ENCODE measurements at regions of chr19 and their contacts with region 1.

Region 1: GRCh38 chr19:10644260-10645007 is 9.7 kb upstream of the ILF3 start:
- DNase-seq: peak; percentile 90
- ATAC-seq: peak; percentile 90
- H3K4me3 Mint-ChIP-seq: no peak overlapping the region
- H3K27ac Mint-ChIP-seq: peak overlapping the region; percentile 89
- H3K4me1 Mint-ChIP-seq: peaks cover 37% of the 10 kb centered on the region
- H3K27me3 Mint-ChIP-seq: no peaks in the 10 kb centered on the region

Region 2: GRCh38 chr19:10565567-10566407 is 78.6 kb before region 1 on chr19 and contains the start of gene KRI1:
- CTCF ChIA-PET with region 1: interaction called, 14 read pairs
- POLR2A ChIA-PET with region 1: interaction called, 4 read pairs
- DNase-seq: peak; percentile 99
- ATAC-seq: peak; percentile 51
- H3K4me3 Mint-ChIP-seq: peak within 1 kb of the TSS; percentile 98
- H3K27ac Mint-ChIP-seq: peak within 1 kb of the TSS; percentile 94
- H3K4me1 Mint-ChIP-seq: peaks cover 46% of the 10 kb centered on the region
- H3K27me3 Mint-ChIP-seq: no peaks in the 10 kb centered on the region
- total RNA-seq, gene KRI1: 64.0 to 72.8 TPM

Region 3: DNA sequence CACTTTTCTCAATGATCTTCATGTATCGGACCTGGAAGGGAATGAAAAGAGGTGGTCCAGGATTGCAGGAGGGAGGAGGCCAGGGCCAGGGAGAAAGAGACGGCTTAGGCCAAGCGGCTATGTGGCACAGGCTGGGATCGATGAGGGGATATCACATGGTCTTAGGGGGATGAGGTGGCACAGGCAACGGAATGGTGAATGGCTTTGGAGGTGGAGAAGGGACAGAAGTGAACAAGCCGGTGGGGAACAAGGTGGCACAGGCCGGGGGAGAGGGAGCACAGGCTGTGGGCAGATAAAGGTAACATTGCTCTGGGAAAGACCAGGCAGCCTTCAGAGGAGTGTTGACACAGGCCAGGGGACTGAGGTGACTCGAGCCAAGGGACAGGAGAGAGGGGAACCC is 70.0 kb before region 1 on chr19:
- CTCF ChIA-PET with region 1: interaction called, 421 read pairs
- POLR2A ChIA-PET with region 1: no interaction called
- DNase-seq: no peak
- ATAC-seq: no peak
- H3K4me3 Mint-ChIP-seq: no peak overlapping the region
- H3K27ac Mint-ChIP-seq: no peak overlapping the region
- H3K4me1 Mint-ChIP-seq: peaks cover 37% of the 10 kb centered on the region
- H3K27me3 Mint-ChIP-seq: no peaks in the 10 kb centered on the region

Region 4: DNA sequence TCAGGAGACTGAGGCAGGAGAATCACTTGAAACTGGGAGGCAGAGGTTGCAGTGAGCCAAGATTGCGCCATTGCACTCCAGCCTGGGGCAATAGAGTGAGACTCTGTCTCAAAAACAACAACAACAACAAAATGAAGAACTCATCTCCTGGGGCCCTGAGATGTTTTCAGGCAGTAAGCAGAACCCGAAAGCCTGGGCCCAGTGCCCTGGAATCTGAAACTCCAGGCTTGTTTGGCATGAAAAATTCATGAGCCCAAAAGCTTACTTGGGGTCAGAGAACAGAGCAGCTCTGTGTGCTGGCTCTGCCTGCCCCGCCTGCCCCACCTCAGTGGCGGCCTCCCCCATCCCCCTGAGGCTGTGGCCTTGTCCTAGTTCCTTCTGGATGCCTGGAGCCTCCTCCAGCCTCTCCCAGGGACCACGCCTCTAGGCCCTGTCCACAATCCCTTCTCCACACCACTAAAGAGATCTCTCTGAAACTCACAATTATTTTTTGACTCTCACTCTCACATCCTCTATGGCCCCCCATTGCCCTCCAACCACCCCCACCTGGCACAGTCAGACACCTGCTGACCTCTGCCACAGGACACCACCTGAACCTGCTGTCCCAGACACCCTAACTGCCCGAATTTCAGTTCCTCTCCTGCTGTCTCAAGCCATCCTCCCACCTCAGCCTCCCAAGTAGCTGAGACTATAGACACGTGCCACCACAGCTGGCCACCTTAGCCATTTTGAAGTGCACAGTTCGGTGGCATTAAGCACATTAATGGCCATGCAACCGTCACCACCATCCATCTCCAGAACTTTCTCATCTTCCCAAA is 50.4 kb before region 1 on chr19:
- CTCF ChIA-PET with region 1: interaction called, 10 read pairs
- POLR2A ChIA-PET with region 1: no interaction called
- DNase-seq: no peak
- ATAC-seq: no peak
- H3K4me3 Mint-ChIP-seq: no peak overlapping the region
- H3K27ac Mint-ChIP-seq: peak overlapping the region; percentile 76
- H3K4me1 Mint-ChIP-seq: peaks cover 25% of the 10 kb centered on the region
- H3K27me3 Mint-ChIP-seq: peaks cover 2% of the 10 kb centered on the region

Region 5: GRCh38 chr19:10602330-10603083 is 41.9 kb before region 1 on chr19:
- CTCF ChIA-PET with region 1: interaction called, 51 read pairs
- POLR2A ChIA-PET with region 1: interaction called, 25 read pairs
- DNase-seq: peak; percentile 91
- ATAC-seq: peak; percentile 83
- H3K4me3 Mint-ChIP-seq: peak overlapping the region; percentile 94
- H3K27ac Mint-ChIP-seq: peak overlapping the region; percentile 100
- H3K4me1 Mint-ChIP-seq: peaks cover 29% of the 10 kb centered on the region
- H3K27me3 Mint-ChIP-seq: peaks cover 6% of the 10 kb centered on the region

Region 6: DNA sequence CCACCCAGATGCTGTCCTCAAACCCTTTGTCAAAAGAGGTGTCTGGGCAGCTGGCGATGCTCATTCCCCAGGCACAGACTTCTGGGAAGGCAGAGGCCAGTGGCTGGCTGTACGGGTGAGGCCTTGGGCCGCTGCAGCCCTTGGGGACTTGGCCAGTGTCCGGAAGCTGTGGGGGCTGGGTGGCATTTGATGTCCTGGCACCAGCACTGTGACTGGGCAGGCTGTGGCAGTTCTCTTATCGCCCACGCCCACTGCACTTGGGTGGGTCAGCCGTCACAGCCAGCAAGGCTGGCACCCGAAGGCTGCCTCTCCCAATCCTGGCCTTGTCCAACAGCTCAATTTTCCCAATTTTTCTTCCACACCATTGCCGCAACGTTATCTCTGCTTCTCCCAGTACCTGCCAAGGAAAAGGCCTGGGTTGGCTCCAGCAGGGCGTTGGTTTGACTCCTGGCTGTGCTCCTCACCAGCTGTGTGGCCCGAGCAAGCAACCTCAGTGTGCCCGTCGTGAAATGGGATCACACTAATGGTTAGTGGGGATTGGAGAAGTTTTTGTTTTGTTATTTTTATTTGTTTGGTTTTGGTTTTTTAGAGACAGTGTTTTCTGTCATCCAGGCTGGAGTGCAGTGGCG is 31.8 kb before region 1 on chr19:
- CTCF ChIA-PET with region 1: interaction called, 10 read pairs
- POLR2A ChIA-PET with region 1: interaction called, 4 read pairs
- DNase-seq: no peak
- ATAC-seq: no peak
- H3K4me3 Mint-ChIP-seq: no peak overlapping the region
- H3K27ac Mint-ChIP-seq: peak overlapping the region; percentile 55
- H3K4me1 Mint-ChIP-seq: peaks cover 26% of the 10 kb centered on the region
- H3K27me3 Mint-ChIP-seq: no peaks in the 10 kb centered on the region